Sigmoid colon (tissue), 7 donors: ENCODE measurements at regions of chr3 and their contacts with region 1.

Region 1: DNA sequence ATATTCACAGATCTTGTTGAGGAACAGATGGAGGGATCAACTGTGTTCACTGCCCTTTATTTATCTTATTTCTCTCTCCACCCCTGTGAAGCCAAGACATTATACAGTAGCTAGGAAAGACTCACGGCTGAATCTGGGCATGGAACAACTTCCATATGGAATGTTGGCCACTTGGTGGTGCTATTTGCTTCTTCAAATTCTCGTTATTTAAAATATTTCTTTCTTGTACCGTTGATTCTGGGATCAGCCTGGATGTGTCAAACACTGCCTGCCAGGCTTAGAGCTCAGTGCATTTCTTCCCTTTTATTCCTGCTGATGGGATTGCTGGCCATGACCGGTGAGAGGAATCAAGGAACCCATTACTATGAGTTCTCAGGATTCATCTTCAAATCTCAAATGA is 17.5 kb upstream of the GASK1A start:
- DNase-seq: no peak
- H3K4me3 ChIP-seq: no peak overlapping the region
- H3K27ac ChIP-seq: no peak overlapping the region
- H3K4me1 ChIP-seq: peaks cover 0 to 9% (median 5%) of the 10 kb centered on the region in 4 donors
- H3K27me3 ChIP-seq: no peaks in the 10 kb centered on the region
- CTCF ChIP-seq: peak; percentile 45 to 68 (median 60)
- EP300 ChIP-seq: no peak
- POLR2A ChIP-seq: no peak

Region 2: GRCh38 chr3:42690766-42691680 is 270.6 kb before region 1 on chr3:
- intact Hi-C with region 1: no loop called
- DNase-seq: peak; percentile 59
- H3K4me3 ChIP-seq: no peak overlapping the region
- H3K27ac ChIP-seq: no peak overlapping the region
- H3K4me1 ChIP-seq: peaks cover 0 to 5% (median 4%) of the 10 kb centered on the region in 4 donors
- H3K27me3 ChIP-seq: peaks cover 0 to 6% (median 0%) of the 10 kb centered on the region in 3 donors
- CTCF ChIP-seq: no peak
- EP300 ChIP-seq: no peak
- POLR2A ChIP-seq: no peak

Region 3: GRCh38 chr3:43001094-43001553 is 39.5 kb after region 1 on chr3:
- intact Hi-C with region 1: loop called (anchors 5 kb)
- DNase-seq: peak; percentile 97
- H3K4me3 ChIP-seq: peak overlapping the region in 2 of 4 donors; percentile 16 to 23
- H3K27ac ChIP-seq: peak overlapping the region; percentile 63 to 90 (median 88)
- H3K4me1 ChIP-seq: peaks cover 0 to 78% (median 56%) of the 10 kb centered on the region in 4 donors
- H3K27me3 ChIP-seq: no peaks in the 10 kb centered on the region
- CTCF ChIP-seq: no peak
- EP300 ChIP-seq: peak; percentile 55 to 95 (median 90)
- POLR2A ChIP-seq: no peak

Region 4: GRCh38 chr3:43105596-43106292 is 144.1 kb after region 1 on chr3 and contains the start of gene POMGNT2:
- intact Hi-C with region 1: loop called (anchors 1 kb)
- DNase-seq: peak; percentile 93
- H3K4me3 ChIP-seq: peak within 1 kb of the TSS; percentile 72 to 91 (median 82)
- H3K27ac ChIP-seq: peak within 1 kb of the TSS; percentile 66 to 83 (median 72)
- H3K4me1 ChIP-seq: peaks cover 0 to 30% (median 23%) of the 10 kb centered on the region in 4 donors
- H3K27me3 ChIP-seq: no peaks in the 10 kb centered on the region
- CTCF ChIP-seq: no peak
- EP300 ChIP-seq: no peak
- POLR2A ChIP-seq: no peak
- total RNA-seq, gene POMGNT2: 15.5 to 20.2 (median 17.2) TPM

Region 5: DNA sequence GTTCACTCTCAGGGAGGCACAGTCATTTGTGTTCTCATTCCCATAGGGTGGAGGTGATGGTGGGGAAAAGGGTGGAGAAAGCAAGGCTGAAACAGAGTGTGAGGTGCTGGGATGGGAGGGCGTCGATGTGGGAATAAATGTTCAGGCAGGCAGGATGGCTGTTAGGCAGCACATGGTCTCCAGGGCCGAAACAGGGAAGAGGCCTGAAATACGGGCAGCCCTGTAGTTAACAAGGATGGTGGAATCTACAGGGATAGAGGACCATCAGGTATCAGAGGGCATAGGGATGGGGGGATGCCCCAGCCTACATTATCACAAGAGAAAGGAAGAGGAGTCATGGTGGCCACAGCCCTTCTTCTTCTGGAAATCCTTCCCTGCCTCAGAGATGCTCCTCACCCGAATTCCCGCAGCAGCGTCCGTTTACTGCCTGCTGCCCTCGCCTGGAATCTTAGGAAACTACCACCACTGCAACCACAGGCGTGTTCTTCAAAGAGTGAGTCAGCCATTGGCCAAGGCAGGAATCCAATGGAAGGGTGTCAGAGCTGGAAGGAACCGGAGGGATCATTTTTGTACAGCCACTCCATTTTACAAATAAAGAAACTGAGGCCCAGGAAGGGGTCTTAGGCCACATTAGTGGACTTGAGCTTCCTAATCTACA is 194.0 kb after region 1 on chr3:
- intact Hi-C with region 1: loop called (anchors 2 kb)
- DNase-seq: peak; percentile 86
- H3K4me3 ChIP-seq: no peak overlapping the region
- H3K27ac ChIP-seq: no peak overlapping the region
- H3K4me1 ChIP-seq: peaks cover 0 to 19% (median 16%) of the 10 kb centered on the region in 4 donors
- H3K27me3 ChIP-seq: no peaks in the 10 kb centered on the region
- CTCF ChIP-seq: peak; percentile 42 to 76 (median 68)
- EP300 ChIP-seq: no peak
- POLR2A ChIP-seq: no peak

Region 6: DNA sequence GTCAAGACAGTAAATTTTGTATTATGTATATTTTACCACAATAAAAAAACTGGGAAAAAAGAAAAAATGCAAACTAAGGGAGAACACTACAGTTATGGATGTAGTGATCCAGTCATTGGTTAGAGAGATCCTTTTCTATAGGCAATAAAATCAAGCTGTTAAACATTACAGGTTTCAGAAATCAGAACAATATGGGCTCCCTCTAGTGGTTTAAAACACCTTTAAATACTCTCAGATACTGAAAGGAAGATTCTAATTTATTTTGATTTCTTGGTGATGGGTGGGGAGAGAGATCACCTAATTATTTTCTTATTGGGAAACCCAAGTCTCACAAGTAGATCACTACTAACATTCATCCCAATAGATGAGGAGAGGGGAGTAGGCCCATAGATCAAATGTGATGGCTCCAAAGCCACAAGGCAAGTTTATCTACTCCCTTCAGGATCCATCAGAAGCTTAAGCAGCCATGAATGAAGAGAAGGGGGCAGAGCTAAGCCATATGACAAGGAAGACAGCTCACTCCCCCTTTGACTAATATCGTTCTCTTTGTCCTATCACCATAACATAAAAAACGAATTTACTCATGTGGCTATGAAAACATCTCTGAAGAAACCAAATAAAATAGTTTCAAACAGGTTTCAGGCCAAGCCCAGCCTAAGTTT is 541.6 kb after region 1 on chr3:
- intact Hi-C with region 1: loop called (anchors 5 kb)
- DNase-seq: no peak
- H3K4me3 ChIP-seq: no peak overlapping the region
- H3K27ac ChIP-seq: no peak overlapping the region
- H3K4me1 ChIP-seq: peaks cover 0 to 3% (median 0%) of the 10 kb centered on the region in 4 donors
- H3K27me3 ChIP-seq: no peaks in the 10 kb centered on the region
- CTCF ChIP-seq: peak; percentile 13 to 52 (median 33)
- EP300 ChIP-seq: no peak
- POLR2A ChIP-seq: no peak

Region 7: DNA sequence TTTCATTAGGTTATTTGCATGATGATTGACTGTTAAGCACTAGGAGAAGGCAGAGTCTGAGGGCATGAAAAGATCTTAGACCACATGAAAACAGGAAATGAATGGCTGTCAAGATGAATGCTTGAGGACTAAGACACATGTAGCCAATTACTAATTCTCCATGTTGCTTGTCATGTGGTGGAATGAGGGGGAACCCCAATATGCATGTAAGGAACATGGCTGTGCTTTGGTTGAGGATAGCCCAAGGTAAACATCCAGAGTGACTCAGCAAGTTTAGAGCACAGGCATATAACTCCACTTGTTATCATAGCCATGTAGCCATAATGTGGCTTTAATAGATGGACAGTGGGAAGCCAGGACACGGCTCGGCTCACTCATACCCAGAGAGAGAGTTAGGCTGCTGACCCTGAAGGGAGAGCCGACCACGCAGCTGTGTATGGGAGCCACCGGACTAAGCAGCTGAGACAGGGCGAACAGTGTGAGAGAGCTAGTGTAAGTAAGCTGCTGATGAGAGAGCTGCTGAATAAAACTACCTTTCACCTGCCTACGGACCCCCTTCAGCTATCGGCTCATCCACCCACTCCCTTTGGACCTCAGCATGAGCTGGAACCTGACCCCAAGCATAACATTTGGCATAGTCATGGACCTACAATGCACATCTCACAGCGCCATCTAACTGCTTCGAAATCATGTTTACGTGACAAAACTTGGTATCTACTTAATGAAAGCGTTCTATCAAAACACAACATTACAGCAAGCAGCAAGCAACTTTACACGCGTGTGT is 622.6 kb after region 1 on chr3:
- intact Hi-C with region 1: no loop called
- DNase-seq: no peak
- H3K4me3 ChIP-seq: no peak overlapping the region
- H3K27ac ChIP-seq: peak overlapping the region in 1 of 4 donors; percentile 70
- H3K4me1 ChIP-seq: peaks cover 0 to 27% (median 22%) of the 10 kb centered on the region in 4 donors
- H3K27me3 ChIP-seq: no peaks in the 10 kb centered on the region
- CTCF ChIP-seq: no peak
- EP300 ChIP-seq: no peak
- POLR2A ChIP-seq: no peak